ENCODE measurements at regions of chr7 and their contacts with region 1.

Region 1: DNA sequence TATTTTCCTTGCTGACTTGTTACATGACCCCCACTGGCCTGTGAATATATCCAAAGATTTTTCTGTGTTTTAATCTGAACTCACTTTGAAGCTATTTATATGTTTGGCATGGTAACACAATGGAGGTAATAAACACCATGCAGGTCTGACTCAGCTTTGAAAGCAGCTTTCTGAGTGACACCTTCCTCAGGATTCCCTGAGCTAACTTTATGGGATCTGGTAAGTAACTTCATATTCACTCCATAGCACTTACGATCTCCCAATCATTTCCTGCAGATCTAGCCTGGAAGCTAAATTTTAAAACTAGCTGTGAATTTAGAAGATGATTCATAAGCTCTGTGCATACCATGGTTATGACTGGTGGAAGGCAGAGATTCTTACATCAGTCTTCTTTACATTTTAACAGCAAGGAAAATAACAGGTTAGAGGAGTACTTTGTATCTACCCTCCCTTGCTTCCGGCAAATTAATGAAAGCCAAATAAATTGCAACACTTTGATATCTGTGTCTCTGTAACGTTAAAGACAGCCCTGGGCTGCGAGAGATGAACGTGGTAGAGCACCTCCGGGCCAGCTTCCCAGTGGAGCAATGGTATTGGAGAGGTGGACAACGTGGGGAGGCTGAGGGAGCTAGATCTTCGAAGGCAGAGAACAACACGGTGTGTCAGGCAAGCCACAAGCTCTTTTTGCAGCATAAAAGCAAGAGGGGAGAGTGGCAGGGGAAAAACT is 170.2 kb upstream of the KLF14 start:
- DNase-seq: peak; percentile 96
- H3K4me3 ChIP-seq: no peak overlapping the region
- H3K27me3 ChIP-seq: no peaks in the 10 kb centered on the region
- CTCF ChIP-seq: no peak

Region 2: GRCh38 chr7:130831817-130832481 is 72.2 kb before region 1 on chr7:
- CTCF ChIA-PET with region 1: no interaction called
- POLR2A ChIA-PET with region 1: no interaction called
- DNase-seq: no peak
- H3K4me3 ChIP-seq: no peak overlapping the region
- H3K27me3 ChIP-seq: no peaks in the 10 kb centered on the region
- CTCF ChIP-seq: peak; percentile 63

Region 3: GRCh38 chr7:130961128-130961601 is 57.0 kb after region 1 on chr7:
- CTCF ChIA-PET with region 1: interaction called, 10 read pairs
- POLR2A ChIA-PET with region 1: no interaction called
- DNase-seq: no peak
- H3K4me3 ChIP-seq: no peak overlapping the region
- H3K27me3 ChIP-seq: no peaks in the 10 kb centered on the region
- CTCF ChIP-seq: no peak

Region 4: DNA sequence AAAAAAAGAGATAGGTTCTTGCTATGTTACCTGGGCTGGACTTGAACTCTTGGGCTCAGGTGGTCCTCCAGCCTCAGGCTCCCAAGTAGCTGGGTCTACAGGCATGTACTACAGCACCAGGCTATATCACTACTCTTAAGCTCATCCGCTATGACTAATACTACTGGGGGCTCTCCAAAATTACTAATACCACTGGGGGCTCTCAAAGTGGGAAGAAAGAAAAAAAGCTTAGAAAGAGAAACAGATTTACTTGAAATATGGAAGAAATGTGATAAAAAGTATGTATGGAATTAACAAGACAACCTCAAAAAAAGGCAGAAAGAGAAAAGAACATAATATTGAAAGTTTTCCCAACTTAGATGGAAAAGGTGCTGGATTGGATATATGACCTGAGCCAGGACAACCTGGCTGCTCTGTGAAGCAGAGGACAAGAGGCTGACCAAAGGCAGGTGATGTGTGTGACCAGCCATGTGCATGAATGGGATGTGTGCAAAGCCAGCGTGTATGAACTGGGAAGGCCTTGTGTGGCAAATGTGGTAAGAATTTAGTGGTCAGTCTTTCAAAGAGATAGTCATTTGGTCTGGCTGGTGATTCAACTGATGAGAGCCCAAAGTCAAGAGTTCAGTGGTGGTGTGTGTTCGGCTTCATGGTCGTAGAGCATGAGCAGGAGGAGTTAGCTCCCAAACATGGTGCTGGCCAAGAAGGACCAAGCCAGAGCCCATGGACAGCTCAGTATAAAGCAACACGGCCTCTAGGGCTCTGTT is 62.2 kb after region 1 on chr7:
- CTCF ChIA-PET with region 1: no interaction called
- POLR2A ChIA-PET with region 1: interaction called, 11 read pairs
- DNase-seq: no peak
- H3K4me3 ChIP-seq: no peak overlapping the region
- H3K27me3 ChIP-seq: no peaks in the 10 kb centered on the region
- CTCF ChIP-seq: no peak